ENCODE measurements at regions of chrX and their contacts with region 1.

Region 1: GRCh38 chrX:84487365-84488353 is 14.6 kb downstream of the HDX start:
- DNase-seq: peak; percentile 19
- ATAC-seq: peak; percentile 100
- H3K4me3 ChIP-seq: no peak overlapping the region
- H3K27ac ChIP-seq: peak overlapping the region; percentile 33; the same call in 1 of the 2 replicates
- H3K4me1 ChIP-seq: no peaks in the 10 kb centered on the region; the same call in 1 of the 2 replicates
- H3K27me3 ChIP-seq: no peaks in the 10 kb centered on the region
- CTCF ChIP-seq: no peak
- EP300 ChIP-seq: peak in 1 of 2 experiments; percentile 84; a peak in 2 of 4 replicates
- POLR2A ChIP-seq: no peak
- RAD21 ChIP-seq: no peak

Region 2: DNA sequence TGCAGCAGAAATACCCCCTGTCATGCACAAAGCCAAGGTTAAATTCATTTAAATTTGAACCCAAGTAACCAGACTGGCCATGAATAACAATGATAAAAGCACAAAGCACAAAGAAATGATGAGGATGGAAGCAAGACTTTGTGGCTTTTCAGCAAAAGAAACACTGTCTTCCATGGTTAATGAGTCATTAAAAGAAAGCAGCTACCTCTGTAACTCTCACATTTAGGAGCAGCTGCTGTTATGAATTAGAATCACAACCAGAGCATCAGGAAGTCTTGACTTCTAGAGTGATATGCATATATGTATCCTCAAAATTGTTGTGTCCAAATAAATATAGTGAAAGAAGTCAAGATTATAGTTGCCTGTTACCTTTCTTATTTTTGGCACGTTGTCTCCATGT is 229.0 kb before region 1 on chrX:
- CTCF ChIA-PET with region 1: no interaction called
- POLR2A ChIA-PET with region 1: no interaction called
- RAD21 ChIA-PET with region 1: no interaction called
- SMC1A ChIA-PET with region 1: no interaction called
- in situ Hi-C with region 1: no loop called
- intact Hi-C with region 1: no loop called
- DNase-seq: no peak
- ATAC-seq: no peak
- H3K4me3 ChIP-seq: no peak overlapping the region
- H3K27ac ChIP-seq: no peak overlapping the region
- H3K4me1 ChIP-seq: no peaks in the 10 kb centered on the region
- H3K27me3 ChIP-seq: no peaks in the 10 kb centered on the region
- CTCF ChIP-seq: no peak
- EP300 ChIP-seq: no peak
- POLR2A ChIP-seq: no peak
- RAD21 ChIP-seq: no peak

Region 3: DNA sequence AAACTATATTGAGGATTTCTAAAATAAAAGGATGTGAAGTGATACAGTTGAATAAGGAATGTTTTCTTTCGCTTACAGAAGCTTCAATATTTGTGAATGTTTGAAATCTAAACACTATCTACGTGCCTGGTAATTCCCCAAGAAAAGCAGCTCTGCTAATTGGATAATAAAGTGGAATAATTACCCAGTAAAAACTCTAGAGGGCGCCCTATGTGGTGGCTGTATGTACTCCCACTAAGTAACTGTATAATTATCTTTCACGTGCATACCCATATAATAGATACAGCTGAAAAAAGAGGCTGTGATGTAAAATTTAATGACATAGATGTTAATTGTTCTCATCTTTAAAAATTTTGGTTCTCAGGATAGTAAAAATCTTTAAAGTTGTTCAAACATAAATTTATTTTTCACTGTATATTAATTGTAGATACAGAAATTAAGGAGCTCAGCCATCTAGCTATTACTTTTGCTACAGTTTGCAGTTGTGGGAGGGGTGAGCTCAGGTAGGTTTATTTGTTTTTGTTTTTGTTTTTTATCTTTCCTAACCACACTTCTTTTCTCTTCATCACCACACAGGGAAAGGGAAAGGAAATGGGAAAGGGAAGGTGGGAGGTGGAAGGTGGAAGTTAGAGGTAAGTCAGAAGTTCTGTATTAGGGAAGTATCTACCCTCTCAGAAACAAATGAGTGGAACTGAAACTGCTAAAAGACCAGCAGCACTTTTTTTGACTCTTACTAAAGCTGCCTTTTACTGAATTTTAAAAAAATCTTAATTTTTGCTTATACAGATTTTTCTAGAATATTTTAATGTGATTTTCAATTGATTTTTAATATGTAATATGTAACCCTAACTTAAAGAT is 147.9 kb before region 1 on chrX:
- CTCF ChIA-PET with region 1: no interaction called
- POLR2A ChIA-PET with region 1: no interaction called
- RAD21 ChIA-PET with region 1: no interaction called
- SMC1A ChIA-PET with region 1: no interaction called
- in situ Hi-C with region 1: no loop called
- intact Hi-C with region 1: no loop called
- DNase-seq: no peak
- ATAC-seq: peak; percentile 67
- H3K4me3 ChIP-seq: no peak overlapping the region
- H3K27ac ChIP-seq: no peak overlapping the region
- H3K4me1 ChIP-seq: no peaks in the 10 kb centered on the region
- H3K27me3 ChIP-seq: no peaks in the 10 kb centered on the region
- CTCF ChIP-seq: peak; percentile 21 to 56 (median 30); a peak in 3 of 6 replicates
- EP300 ChIP-seq: no peak
- POLR2A ChIP-seq: no peak
- RAD21 ChIP-seq: peak; percentile 40; the same call in 1 of the 2 replicates

Region 4: GRCh38 chrX:84501798-84502628 is 14.4 kb after region 1 on chrX and contains the start of gene HDX:
- CTCF ChIA-PET with region 1: no interaction called
- POLR2A ChIA-PET with region 1: no interaction called
- RAD21 ChIA-PET with region 1: no interaction called
- SMC1A ChIA-PET with region 1: interaction called, 11 read pairs
- in situ Hi-C with region 1: no loop called
- intact Hi-C with region 1: no loop called
- DNase-seq: peak; percentile 27
- ATAC-seq: no peak
- H3K4me3 ChIP-seq: peak within 1 kb of the TSS; percentile 60
- H3K27ac ChIP-seq: peak within 1 kb of the TSS; percentile 76
- H3K4me1 ChIP-seq: no peaks in the 10 kb centered on the region
- H3K27me3 ChIP-seq: no peaks in the 10 kb centered on the region
- CTCF ChIP-seq: no peak
- EP300 ChIP-seq: no peak
- POLR2A ChIP-seq: peak; percentile 72
- RAD21 ChIP-seq: no peak
- polyA plus RNA-seq, gene HDX: 5.5 to 7.9 TPM

Measured in GM12878 (cell line).